ENCODE measurements at regions of chr6 and their contacts with region 1.

Region 1: GRCh38 chr6:79056226-79056625 is 21.8 kb downstream of the PHIP start:
- DNase-seq: no peak
- ATAC-seq: no peak
- H3K4me3 ChIP-seq: no peak overlapping the region
- H3K4me3 Mint-ChIP-seq: no peak overlapping the region
- H3K27ac ChIP-seq: no peak overlapping the region
- H3K27ac Mint-ChIP-seq: peak overlapping the region in 2 of 9 donors; percentile 3 to 55
- H3K4me1 ChIP-seq: no peaks in the 10 kb centered on the region
- H3K4me1 Mint-ChIP-seq: peaks cover 6 to 53% (median 26%) of the 10 kb centered on the region in 7 donors
- H3K27me3 ChIP-seq: no peaks in the 10 kb centered on the region
- H3K27me3 Mint-ChIP-seq: no peaks in the 10 kb centered on the region

Region 2: DNA sequence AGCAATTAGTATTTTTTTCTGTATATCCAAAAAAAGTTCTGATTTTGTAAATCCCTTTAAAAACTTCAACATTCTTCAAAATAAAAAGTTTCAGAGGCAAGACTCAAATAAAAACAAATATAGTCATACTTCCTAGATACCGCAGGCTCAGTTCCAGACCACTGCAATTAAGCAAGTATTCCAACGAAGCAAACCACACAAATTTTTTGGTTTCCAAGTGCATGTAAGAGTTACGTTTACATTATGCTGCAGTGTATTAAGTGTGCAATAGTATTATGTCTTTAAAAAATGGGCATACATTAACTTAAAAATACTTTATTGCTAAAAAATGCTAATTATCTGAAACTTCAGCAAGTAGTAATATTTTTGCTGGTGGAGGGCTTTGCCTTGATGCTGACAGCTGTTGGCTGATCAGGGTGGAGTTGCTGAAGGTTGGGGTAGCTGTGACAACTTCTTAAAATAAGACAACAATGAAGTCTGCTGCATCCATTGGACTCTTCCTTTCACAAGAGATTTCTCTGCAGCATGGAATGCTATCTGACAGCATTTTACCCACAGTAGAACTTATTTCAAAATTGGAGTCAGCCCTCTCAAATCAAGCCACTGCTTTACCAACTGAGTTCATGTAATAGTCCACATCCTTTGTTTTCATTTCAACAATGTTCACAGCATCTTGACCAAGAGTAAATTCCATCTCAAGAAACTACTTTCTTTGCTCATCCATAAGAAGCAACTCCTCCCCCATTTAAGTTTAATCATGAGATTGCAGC is 24.2 kb before region 1 on chr6:
- CTCF ChIA-PET with region 1: no interaction called
- POLR2A ChIA-PET with region 1: no interaction called
- intact Hi-C with region 1: loop called in 1 of 2 experiments (anchors 2 kb)
- DNase-seq: no peak
- ATAC-seq: no peak
- H3K4me3 ChIP-seq: no peak overlapping the region
- H3K4me3 Mint-ChIP-seq: no peak overlapping the region
- H3K27ac ChIP-seq: no peak overlapping the region
- H3K27ac Mint-ChIP-seq: no peak overlapping the region
- H3K4me1 ChIP-seq: peaks cover 0 to 3% of the 10 kb centered on the region in 2 donors
- H3K4me1 Mint-ChIP-seq: peaks cover 33 to 79% (median 62%) of the 10 kb centered on the region in 7 donors
- H3K27me3 ChIP-seq: no peaks in the 10 kb centered on the region
- H3K27me3 Mint-ChIP-seq: no peaks in the 10 kb centered on the region

Region 3: GRCh38 chr6:79040083-79040482 is 16.1 kb before region 1 on chr6:
- CTCF ChIA-PET with region 1: no interaction called
- POLR2A ChIA-PET with region 1: interaction called, 4 read pairs
- intact Hi-C with region 1: loop called in 1 of 2 experiments (anchors 2 kb)
- DNase-seq: no peak
- ATAC-seq: no peak
- H3K4me3 ChIP-seq: no peak overlapping the region
- H3K4me3 Mint-ChIP-seq: no peak overlapping the region
- H3K27ac ChIP-seq: no peak overlapping the region
- H3K27ac Mint-ChIP-seq: no peak overlapping the region
- H3K4me1 ChIP-seq: peaks cover 3 to 11% of the 10 kb centered on the region in 2 donors
- H3K4me1 Mint-ChIP-seq: peaks cover 30 to 81% (median 64%) of the 10 kb centered on the region in 7 donors
- H3K27me3 ChIP-seq: no peaks in the 10 kb centered on the region
- H3K27me3 Mint-ChIP-seq: no peaks in the 10 kb centered on the region

Measured in naive thymus-derived CD4-positive, alpha-beta T cell (primary cell).